ENCODE measurements at regions of chr16 and their contacts with region 1.

Region 1: GRCh38 chr16:48632137-48632774 is 22.3 kb upstream of the N4BP1 start:
- DNase-seq: no peak
- H3K4me3 Mint-ChIP-seq: no peak overlapping the region
- H3K27ac Mint-ChIP-seq: no peak overlapping the region
- H3K4me1 Mint-ChIP-seq: peaks cover 11% of the 10 kb centered on the region
- H3K27me3 Mint-ChIP-seq: peaks cover 3% of the 10 kb centered on the region

Region 2: GRCh38 chr16:47037746-47038458 is 1594.4 kb before region 1 on chr16:
- CTCF ChIA-PET with region 1: no interaction called
- intact Hi-C with region 1: loop called (anchors 5 kb)
- DNase-seq: peak; percentile 91
- H3K4me3 Mint-ChIP-seq: peak overlapping the region; percentile 74
- H3K27ac Mint-ChIP-seq: no peak overlapping the region
- H3K4me1 Mint-ChIP-seq: peaks cover 8% of the 10 kb centered on the region
- H3K27me3 Mint-ChIP-seq: peaks cover 10% of the 10 kb centered on the region

Region 3: DNA sequence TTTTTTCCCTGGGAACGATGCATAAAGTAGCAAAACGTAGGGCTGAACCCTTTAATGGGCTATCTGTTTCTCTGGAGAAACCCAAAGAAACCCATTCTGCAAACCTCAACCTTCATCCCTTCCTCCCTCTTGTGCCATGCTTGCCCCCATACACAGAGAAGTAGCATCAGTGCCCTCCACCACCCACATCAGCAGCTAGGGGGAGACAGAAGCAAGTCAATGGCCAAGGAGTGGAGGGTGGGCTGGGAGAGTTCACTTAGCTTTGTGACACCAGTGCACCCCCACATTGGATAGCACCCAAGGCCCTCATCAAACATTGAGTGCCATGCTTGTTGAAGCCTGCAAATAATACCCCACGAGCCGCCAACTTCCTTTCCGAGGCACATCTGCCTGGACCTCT is 758.8 kb before region 1 on chr16:
- CTCF ChIA-PET with region 1: no interaction called
- intact Hi-C with region 1: loop called (anchors 5 kb)
- DNase-seq: peak; percentile 7
- H3K4me3 Mint-ChIP-seq: no peak overlapping the region
- H3K27ac Mint-ChIP-seq: no peak overlapping the region
- H3K4me1 Mint-ChIP-seq: no peaks in the 10 kb centered on the region
- H3K27me3 Mint-ChIP-seq: no peaks in the 10 kb centered on the region

Region 4: GRCh38 chr16:48164907-48165726 is 467.1 kb before region 1 on chr16:
- CTCF ChIA-PET with region 1: interaction called, 8 read pairs
- intact Hi-C with region 1: loop called (anchors 1 kb)
- DNase-seq: peak; percentile 78
- H3K4me3 Mint-ChIP-seq: no peak overlapping the region
- H3K27ac Mint-ChIP-seq: peak overlapping the region; percentile 61
- H3K4me1 Mint-ChIP-seq: peaks cover 4% of the 10 kb centered on the region
- H3K27me3 Mint-ChIP-seq: peaks cover 13% of the 10 kb centered on the region

Region 5: DNA sequence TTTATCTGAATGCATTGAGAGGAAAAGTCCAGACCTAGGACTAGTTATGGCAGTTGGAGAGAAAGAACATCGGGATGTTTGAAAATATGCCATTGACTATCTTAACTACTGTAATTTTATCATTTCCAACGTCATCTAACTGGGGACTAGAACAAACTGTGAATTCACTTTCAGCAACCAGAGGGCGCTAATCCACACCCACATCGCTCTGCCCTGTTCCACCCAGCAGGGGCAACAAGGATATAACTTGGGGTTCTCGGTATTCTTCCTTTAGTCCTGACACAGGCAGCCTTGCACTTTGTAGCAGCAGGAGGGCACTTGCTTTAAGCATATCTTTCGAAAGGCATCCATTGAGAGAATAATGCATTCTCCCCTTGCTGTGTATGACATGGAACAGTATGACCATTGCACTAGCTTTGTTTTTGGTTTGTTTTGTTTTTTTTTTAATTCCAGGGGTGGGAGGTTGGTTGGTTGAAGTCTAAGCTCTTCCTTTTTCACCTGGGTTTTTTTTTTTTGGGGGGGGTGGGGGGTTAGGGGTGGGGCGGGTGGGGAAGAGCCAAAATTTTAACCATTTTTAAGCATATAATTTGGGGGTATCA is 278.6 kb before region 1 on chr16:
- CTCF ChIA-PET with region 1: interaction called, 31 read pairs
- intact Hi-C with region 1: loop called (anchors 1 kb)
- DNase-seq: peak; percentile 79
- H3K4me3 Mint-ChIP-seq: no peak overlapping the region
- H3K27ac Mint-ChIP-seq: peak overlapping the region; percentile 54
- H3K4me1 Mint-ChIP-seq: peaks cover 18% of the 10 kb centered on the region
- H3K27me3 Mint-ChIP-seq: no peaks in the 10 kb centered on the region

Measured in activated naive CD4-positive, alpha-beta T cell treated with anti-CD3 and anti-CD28 coated beads for 36 hours (primary cell).